ENCODE measurements at regions of chr1 and their contacts with region 1.

Region 1: GRCh38 chr1:23403735-23404486 is 20.6 kb downstream of the TCEA3 start:
- H3K4me3 ChIP-seq: no peak overlapping the region
- H3K27ac ChIP-seq: peak overlapping the region; percentile 26
- H3K4me1 ChIP-seq: peaks cover 13% of the 10 kb centered on the region
- CTCF ChIP-seq: peak; percentile 96

Region 2: DNA sequence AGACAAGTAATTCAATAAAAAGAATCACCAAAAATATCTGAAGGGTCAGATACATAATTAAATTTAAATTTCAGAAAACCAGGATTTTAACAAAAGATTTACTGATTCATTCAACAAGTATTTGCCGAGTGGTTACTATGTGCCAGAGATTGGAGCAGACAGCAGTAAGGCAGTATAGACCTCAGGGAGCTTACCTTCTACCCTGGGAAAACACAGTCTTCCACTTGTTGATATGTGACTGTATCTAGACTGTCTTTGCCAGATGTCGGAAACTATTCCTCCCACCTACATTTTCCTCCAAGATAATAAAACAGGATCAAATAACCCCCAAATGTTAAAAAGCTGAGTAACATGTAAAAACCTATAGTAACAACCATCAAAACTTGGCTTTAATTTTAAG is 66.0 kb before region 1 on chr1:
- CTCF ChIA-PET with region 1: interaction called, 20 read pairs
- POLR2A ChIA-PET with region 1: interaction called, 4 read pairs
- H3K4me3 ChIP-seq: no peak overlapping the region
- H3K27ac ChIP-seq: no peak overlapping the region
- H3K4me1 ChIP-seq: peaks cover 16% of the 10 kb centered on the region
- CTCF ChIP-seq: no peak

Region 3: DNA sequence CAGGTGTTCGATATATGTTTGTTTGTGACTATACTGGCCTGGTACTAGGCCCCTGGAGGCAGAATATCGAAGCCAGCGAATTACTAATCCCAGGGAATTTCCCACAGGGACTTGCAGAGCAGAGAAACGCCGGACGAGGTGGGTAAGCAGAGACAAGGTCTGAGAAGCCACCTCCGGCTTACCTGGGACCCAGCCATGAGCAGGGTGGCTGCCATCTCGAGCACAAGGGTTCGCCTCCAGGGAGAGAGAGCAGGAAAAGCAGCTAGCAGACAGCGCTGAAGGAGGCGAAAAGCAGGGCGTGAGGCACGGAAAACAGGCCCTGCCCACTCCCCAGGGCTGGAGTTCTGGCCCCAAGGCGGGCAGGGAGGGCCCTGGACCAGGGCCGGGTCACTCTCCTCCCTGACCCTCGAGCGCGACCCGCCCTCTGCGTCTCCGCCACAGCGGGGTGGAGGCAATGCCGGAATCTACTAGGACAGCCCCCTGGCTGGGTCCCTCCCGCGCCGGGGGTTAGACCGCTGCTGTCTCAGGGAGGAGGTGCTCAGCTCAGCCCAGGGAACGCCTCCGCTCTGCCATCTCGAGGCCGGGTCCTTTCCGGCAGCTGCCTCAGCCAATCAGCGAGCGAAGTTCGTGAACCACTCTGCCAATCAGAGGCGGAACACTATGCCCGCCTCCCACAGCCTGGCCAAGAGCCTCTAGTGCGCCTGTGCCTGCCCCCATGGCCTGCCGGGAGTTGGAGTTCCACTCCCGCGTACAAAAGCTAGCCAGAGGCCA is 35.9 kb before region 1 on chr1:
- CTCF ChIA-PET with region 1: interaction called, 16 read pairs
- POLR2A ChIA-PET with region 1: interaction called, 32 read pairs
- H3K4me3 ChIP-seq: peak overlapping the region; percentile 95
- H3K27ac ChIP-seq: peak overlapping the region; percentile 93
- H3K4me1 ChIP-seq: peaks cover 17% of the 10 kb centered on the region
- CTCF ChIP-seq: peak; percentile 38; the same call in 1 of the 2 replicates

Region 4: DNA sequence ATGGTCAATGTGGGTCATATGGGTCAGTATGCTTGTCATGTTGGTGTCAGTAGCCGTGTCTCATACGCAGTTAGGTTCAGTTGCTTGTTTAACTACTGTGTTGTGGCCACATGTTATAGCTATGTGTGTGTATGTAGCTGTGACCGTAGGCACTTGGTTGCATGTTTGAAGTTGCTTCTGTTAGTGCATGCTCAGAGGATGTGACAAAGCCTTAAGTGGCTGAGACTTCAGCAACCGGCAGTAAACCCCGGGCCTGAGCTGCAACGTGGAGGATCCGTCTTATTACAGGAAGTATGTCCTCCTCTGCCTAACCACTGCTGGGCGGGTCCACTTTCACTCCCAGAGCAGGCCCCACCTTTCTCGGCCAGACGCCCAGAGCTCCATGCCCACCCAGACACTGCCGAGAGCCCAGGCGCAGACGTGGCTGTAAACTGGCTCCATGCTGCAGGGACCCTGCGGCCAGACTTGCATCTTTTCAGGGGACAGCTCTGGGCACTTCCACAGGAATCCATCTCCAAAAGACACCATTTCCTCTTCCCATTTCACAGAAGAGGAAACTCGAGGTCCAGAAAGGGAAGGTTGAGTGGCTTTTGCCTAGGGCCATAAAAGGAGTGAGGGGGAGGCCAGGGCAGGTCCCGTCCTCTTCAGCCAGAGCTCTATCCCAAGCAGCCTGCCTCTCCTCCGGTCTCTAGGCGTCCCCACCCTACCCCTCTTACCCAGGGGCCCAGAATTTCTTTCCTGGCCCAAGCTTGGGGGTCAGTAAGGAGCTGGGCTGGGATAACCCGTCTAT is 18.5 kb after region 1 on chr1:
- CTCF ChIA-PET with region 1: interaction called, 18 read pairs
- POLR2A ChIA-PET with region 1: interaction called, 5 read pairs
- H3K4me3 ChIP-seq: no peak overlapping the region
- H3K27ac ChIP-seq: no peak overlapping the region
- H3K4me1 ChIP-seq: no peaks in the 10 kb centered on the region
- CTCF ChIP-seq: no peak

Measured in HEK293 (cell line).